Mammary epithelial cell (primary cell): ENCODE measurements at regions of chr14 and their contacts with region 1.

Region 1: GRCh38 chr14:70809543-70810244 is 381 bp upstream of the MAP3K9 start:
- DNase-seq: peak; percentile 99
- H3K4me3 ChIP-seq: peak overlapping the region; percentile 51 to 93 (median 88)
- H3K27ac ChIP-seq: peak overlapping the region; percentile 73
- H3K4me1 ChIP-seq: peaks cover 28% of the 10 kb centered on the region
- H3K27me3 ChIP-seq: no peaks in the 10 kb centered on the region
- CTCF ChIP-seq: no peak

Region 2: DNA sequence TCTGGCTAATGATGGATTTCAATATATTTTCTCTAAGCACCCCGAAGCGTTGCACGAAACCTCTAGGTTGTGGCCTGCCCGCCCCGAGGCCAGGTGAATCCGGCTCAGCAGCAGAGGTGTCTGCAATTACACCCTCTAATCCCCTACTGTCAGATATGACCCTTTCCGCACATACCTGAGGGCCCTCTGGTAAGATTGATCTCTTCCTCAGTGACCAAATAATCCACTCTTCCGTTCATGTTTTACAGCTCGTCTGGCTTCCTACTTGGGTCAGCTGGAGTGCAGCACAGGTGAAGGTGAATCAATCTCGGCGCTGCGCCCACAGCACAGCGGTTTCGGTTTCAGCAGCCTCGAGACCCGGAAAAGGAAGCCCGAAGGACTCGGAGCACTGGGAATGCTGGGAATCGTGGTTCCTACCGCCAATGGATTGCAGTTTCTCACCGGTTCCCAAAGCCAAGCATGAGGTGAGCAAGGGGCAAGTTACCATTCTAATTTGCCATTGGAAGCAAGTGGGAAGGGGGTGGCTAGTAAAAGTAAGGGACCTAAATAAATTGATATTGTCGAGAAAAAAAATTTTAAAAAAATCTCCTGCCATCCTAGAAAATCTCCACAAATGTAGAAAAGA is 392.9 kb before region 1 on chr14 and contains the start of gene SYNJ2BP:
- CTCF ChIA-PET with region 1: no interaction called
- dilution Hi-C with region 1: no loop called
- in situ Hi-C with region 1: no loop called
- intact Hi-C with region 1: loop called (anchors 5 kb)
- DNase-seq: peak; percentile 88
- H3K4me3 ChIP-seq: peak within 1 kb of the TSS; percentile 70 to 85 (median 82)
- H3K27ac ChIP-seq: peak within 1 kb of the TSS; percentile 74
- H3K4me1 ChIP-seq: no peaks in the 10 kb centered on the region
- H3K27me3 ChIP-seq: peaks cover 2% of the 10 kb centered on the region
- CTCF ChIP-seq: no peak
- total RNA-seq, gene SYNJ2BP: 16.2 to 18.4 TPM

Region 3: GRCh38 chr14:70640938-70641547 is 168.7 kb before region 1 on chr14:
- CTCF ChIA-PET with region 1: no interaction called
- dilution Hi-C with region 1: no loop called
- in situ Hi-C with region 1: no loop called
- intact Hi-C with region 1: loop called (anchors 5 kb)
- DNase-seq: peak; percentile 64
- H3K4me3 ChIP-seq: peak overlapping the region; percentile 37 to 73 (median 70)
- H3K27ac ChIP-seq: no peak overlapping the region
- H3K4me1 ChIP-seq: peaks cover 25% of the 10 kb centered on the region
- H3K27me3 ChIP-seq: no peaks in the 10 kb centered on the region
- CTCF ChIP-seq: no peak

Region 4: DNA sequence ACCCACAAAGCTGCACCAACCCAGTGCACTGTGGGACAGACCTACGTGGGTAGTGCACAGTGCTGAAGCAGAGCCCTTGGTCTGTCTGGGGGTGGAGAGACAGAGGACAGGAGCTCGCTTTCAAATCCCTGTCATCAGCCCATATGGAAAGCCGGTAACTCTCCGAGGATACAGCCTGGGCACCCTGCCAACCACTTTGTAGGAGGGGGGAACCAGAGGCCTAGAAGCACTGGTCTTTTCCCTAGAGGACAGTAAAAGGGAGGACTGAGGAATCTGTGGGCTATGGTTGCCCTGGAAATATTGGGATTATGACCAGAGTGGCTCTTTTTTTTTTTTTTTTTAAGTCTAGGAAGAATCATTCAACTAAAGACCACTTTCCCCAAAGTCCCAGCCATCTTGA is 74.7 kb before region 1 on chr14:
- CTCF ChIA-PET with region 1: no interaction called
- dilution Hi-C with region 1: no loop called
- in situ Hi-C with region 1: no loop called
- intact Hi-C with region 1: no loop called
- DNase-seq: no peak
- H3K4me3 ChIP-seq: no peak overlapping the region
- H3K27ac ChIP-seq: no peak overlapping the region
- H3K4me1 ChIP-seq: peaks cover 4% of the 10 kb centered on the region
- H3K27me3 ChIP-seq: no peaks in the 10 kb centered on the region
- CTCF ChIP-seq: no peak

Region 5: GRCh38 chr14:70771781-70772212 is 37.9 kb before region 1 on chr14:
- CTCF ChIA-PET with region 1: no interaction called
- dilution Hi-C with region 1: no loop called
- in situ Hi-C with region 1: no loop called
- intact Hi-C with region 1: loop called (anchors 5 kb)
- DNase-seq: no peak
- H3K4me3 ChIP-seq: no peak overlapping the region
- H3K27ac ChIP-seq: peak overlapping the region; percentile 66
- H3K4me1 ChIP-seq: peaks cover 29% of the 10 kb centered on the region
- H3K27me3 ChIP-seq: no peaks in the 10 kb centered on the region
- CTCF ChIP-seq: no peak

Region 6: GRCh38 chr14:70821584-70822529 is 12.2 kb after region 1 on chr14:
- CTCF ChIA-PET with region 1: interaction called, 18 read pairs
- dilution Hi-C with region 1: no loop called
- in situ Hi-C with region 1: no loop called
- intact Hi-C with region 1: no loop called
- DNase-seq: peak; percentile 62
- H3K4me3 ChIP-seq: peak overlapping the region; percentile 69 to 76 (median 69)
- H3K27ac ChIP-seq: no peak overlapping the region
- H3K4me1 ChIP-seq: peaks cover 19% of the 10 kb centered on the region
- H3K27me3 ChIP-seq: no peaks in the 10 kb centered on the region
- CTCF ChIP-seq: no peak